ENCODE measurements at regions of chr4 and their contacts with region 1.

Region 1: DNA sequence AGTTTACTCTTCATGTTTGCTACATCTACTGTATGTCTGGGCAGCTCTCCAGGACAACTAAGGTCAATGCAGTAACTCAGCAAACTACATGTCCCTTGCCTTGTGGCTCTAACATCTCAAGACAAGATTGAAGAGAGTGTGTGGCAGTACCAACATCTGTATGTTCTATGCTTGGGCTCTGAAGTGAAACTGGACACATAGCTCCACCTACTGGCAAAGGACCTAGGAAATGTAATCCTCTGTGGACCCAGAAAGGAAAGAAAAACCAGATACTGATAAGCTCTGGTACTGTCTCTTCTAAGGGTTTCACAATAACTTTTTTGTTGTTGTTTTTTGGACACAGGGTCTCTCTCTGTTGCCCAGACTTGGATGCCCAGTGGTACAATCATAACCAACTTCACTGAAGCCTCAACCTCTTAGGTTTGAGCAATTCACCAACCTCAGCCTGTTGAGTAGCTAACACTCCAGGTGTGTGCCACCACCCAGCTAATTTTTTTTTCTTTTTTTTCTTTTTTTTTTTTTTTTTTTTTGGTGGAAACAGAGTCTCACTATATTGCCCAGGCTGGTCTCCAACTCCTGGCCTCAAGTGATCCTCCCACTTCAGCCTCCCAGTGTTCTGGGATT is 64.1 kb downstream of the QDPR start:
- DNase-seq: peak; percentile 43 to 62 (median 55)
- H3K4me3 ChIP-seq: no peak overlapping the region
- H3K4me3 Mint-ChIP-seq: no peak overlapping the region
- H3K27ac ChIP-seq: no peak overlapping the region
- H3K27ac Mint-ChIP-seq: no peak overlapping the region
- H3K4me1 ChIP-seq: no peaks in the 10 kb centered on the region
- H3K4me1 Mint-ChIP-seq: peaks cover 0 to 2% (median under 1%) of the 10 kb centered on the region in 4 donors
- H3K27me3 ChIP-seq: no peaks in the 10 kb centered on the region
- H3K27me3 Mint-ChIP-seq: peaks cover 0 to 2% of the 10 kb centered on the region in 2 donors

Region 2: GRCh38 chr4:16289897-16290554 is 1157.8 kb before region 1 on chr4:
- CTCF ChIA-PET with region 1: interaction called, 30 read pairs
- POLR2A ChIA-PET with region 1: no interaction called
- intact Hi-C with region 1: loop called (anchors 1 kb)
- DNase-seq: peak in 3 of 5 donors; percentile 16 to 26 (median 17)
- H3K4me3 ChIP-seq: no peak overlapping the region
- H3K4me3 Mint-ChIP-seq: peak overlapping the region in 2 of 8 donors; percentile 16 to 38
- H3K27ac ChIP-seq: no peak overlapping the region
- H3K27ac Mint-ChIP-seq: no peak overlapping the region
- H3K4me1 ChIP-seq: no peaks in the 10 kb centered on the region
- H3K4me1 Mint-ChIP-seq: peaks cover 0 to 4% (median 2%) of the 10 kb centered on the region in 4 donors
- H3K27me3 ChIP-seq: no peaks in the 10 kb centered on the region
- H3K27me3 Mint-ChIP-seq: peaks cover 3 to 6% of the 10 kb centered on the region in 2 donors

Region 3: GRCh38 chr4:16916719-16917337 is 531.0 kb before region 1 on chr4:
- CTCF ChIA-PET with region 1: interaction called, 20 read pairs
- POLR2A ChIA-PET with region 1: no interaction called
- intact Hi-C with region 1: loop called (anchors 1 kb)
- DNase-seq: peak; percentile 36 to 61 (median 58)
- H3K4me3 ChIP-seq: no peak overlapping the region
- H3K4me3 Mint-ChIP-seq: no peak overlapping the region
- H3K27ac ChIP-seq: no peak overlapping the region
- H3K27ac Mint-ChIP-seq: no peak overlapping the region
- H3K4me1 ChIP-seq: no peaks in the 10 kb centered on the region
- H3K4me1 Mint-ChIP-seq: peaks cover 0 to 3% (median 0%) of the 10 kb centered on the region in 4 donors
- H3K27me3 ChIP-seq: no peaks in the 10 kb centered on the region
- H3K27me3 Mint-ChIP-seq: no peaks in the 10 kb centered on the region

Region 4: DNA sequence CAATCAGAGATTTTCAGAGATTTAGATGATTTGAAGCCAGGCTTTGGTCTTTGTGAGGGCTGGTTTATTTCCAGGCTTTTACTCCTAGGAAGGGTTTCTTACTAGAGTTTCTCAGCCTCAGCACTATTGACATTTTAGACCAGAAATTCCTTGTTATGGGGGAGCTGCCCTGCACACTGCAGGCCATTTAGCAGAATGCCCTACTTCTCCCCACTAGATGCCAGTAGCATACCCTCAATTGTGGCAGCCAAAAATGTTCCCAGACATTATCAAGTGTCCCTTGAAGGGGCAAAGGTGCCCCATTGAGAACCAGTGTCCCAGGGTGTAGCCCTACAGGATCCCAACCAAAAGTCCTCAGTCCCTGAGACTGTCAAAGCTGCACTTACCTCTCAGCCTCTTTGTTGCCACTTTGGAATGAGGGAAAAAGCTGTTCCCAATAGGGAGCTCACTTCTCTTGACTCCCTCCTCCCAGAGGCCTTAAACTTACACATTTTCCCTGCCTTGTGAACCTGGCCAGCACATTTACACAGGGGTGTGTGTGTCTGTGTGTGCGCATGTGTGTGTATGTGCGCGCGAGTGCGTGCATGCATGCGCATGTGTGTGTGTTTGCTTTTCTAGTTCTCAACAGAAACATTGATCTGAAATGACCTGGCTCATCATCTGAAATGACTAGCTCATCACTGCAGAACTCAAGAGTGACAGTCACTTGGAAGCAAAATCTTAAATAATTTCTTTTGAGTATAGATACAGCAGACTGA is 167.3 kb before region 1 on chr4:
- CTCF ChIA-PET with region 1: interaction called, 15 read pairs
- POLR2A ChIA-PET with region 1: no interaction called
- intact Hi-C with region 1: loop called (anchors 1 kb)
- DNase-seq: no peak
- H3K4me3 ChIP-seq: no peak overlapping the region
- H3K4me3 Mint-ChIP-seq: no peak overlapping the region
- H3K27ac ChIP-seq: no peak overlapping the region
- H3K27ac Mint-ChIP-seq: no peak overlapping the region
- H3K4me1 ChIP-seq: no peaks in the 10 kb centered on the region
- H3K4me1 Mint-ChIP-seq: no peaks in the 10 kb centered on the region
- H3K27me3 ChIP-seq: no peaks in the 10 kb centered on the region
- H3K27me3 Mint-ChIP-seq: peaks cover 0 to 2% of the 10 kb centered on the region in 2 donors

Region 5: DNA sequence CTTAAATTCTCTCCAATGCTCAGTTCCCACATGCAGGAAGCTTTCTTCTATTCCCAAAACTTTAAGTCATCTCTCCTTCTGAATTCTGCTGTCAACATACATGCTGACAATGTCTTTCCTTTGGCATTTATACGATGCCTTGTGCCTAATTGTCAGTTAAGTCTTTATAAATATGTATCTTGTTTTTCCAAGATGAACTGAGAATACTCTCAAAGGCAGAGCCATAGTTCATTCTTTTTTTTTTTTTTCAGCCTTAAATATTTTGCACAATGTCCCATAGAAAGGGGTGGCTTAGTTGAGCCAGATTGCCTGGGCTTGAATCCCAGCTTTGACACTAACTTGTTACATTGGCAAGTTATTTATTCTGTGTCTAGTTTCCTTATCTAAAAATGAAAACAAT is 146.5 kb before region 1 on chr4:
- CTCF ChIA-PET with region 1: no interaction called
- POLR2A ChIA-PET with region 1: no interaction called
- intact Hi-C with region 1: no loop called
- DNase-seq: no peak
- H3K4me3 ChIP-seq: no peak overlapping the region
- H3K4me3 Mint-ChIP-seq: no peak overlapping the region
- H3K27ac ChIP-seq: no peak overlapping the region
- H3K27ac Mint-ChIP-seq: no peak overlapping the region
- H3K4me1 ChIP-seq: no peaks in the 10 kb centered on the region
- H3K4me1 Mint-ChIP-seq: no peaks in the 10 kb centered on the region
- H3K27me3 ChIP-seq: no peaks in the 10 kb centered on the region
- H3K27me3 Mint-ChIP-seq: peaks cover 11 to 15% of the 10 kb centered on the region in 2 donors

Region 6: GRCh38 chr4:17347445-17347844 is 100.3 kb before region 1 on chr4:
- CTCF ChIA-PET with region 1: interaction called, 21 read pairs
- POLR2A ChIA-PET with region 1: interaction called, 3 read pairs
- intact Hi-C with region 1: loop called (anchors 1 kb)
- DNase-seq: peak in 4 of 5 donors; percentile 13 to 30 (median 24)
- H3K4me3 ChIP-seq: no peak overlapping the region
- H3K4me3 Mint-ChIP-seq: no peak overlapping the region
- H3K27ac ChIP-seq: no peak overlapping the region
- H3K27ac Mint-ChIP-seq: no peak overlapping the region
- H3K4me1 ChIP-seq: no peaks in the 10 kb centered on the region
- H3K4me1 Mint-ChIP-seq: no peaks in the 10 kb centered on the region
- H3K27me3 ChIP-seq: no peaks in the 10 kb centered on the region
- H3K27me3 Mint-ChIP-seq: no peaks in the 10 kb centered on the region

Region 7: GRCh38 chr4:17468371-17469221 is 20.8 kb after region 1 on chr4:
- CTCF ChIA-PET with region 1: interaction called, 15 read pairs
- POLR2A ChIA-PET with region 1: no interaction called
- intact Hi-C with region 1: no loop called
- DNase-seq: no peak
- H3K4me3 ChIP-seq: no peak overlapping the region
- H3K4me3 Mint-ChIP-seq: no peak overlapping the region
- H3K27ac ChIP-seq: no peak overlapping the region
- H3K27ac Mint-ChIP-seq: no peak overlapping the region
- H3K4me1 ChIP-seq: no peaks in the 10 kb centered on the region
- H3K4me1 Mint-ChIP-seq: peaks cover 0 to 4% (median 0%) of the 10 kb centered on the region in 4 donors
- H3K27me3 ChIP-seq: no peaks in the 10 kb centered on the region
- H3K27me3 Mint-ChIP-seq: no peaks in the 10 kb centered on the region

Region 8: DNA sequence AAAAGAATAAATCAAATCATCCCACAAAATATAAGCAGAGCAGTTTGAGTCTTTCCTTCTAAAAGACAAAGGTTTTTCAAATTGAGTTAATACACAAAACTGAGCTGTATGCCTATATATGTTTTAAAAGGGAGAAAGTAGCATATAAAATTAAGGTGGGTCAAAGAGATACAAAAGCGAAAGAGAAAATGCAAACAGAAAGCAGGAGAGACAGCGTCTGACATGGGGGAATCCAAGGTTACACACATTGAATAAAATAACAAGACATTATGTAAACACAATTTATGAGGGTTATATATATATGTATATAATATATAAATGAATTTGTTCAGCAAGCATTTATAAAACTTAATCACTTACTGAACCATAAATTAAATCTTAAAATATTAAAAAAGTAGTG is 849.9 kb after region 1 on chr4:
- CTCF ChIA-PET with region 1: no interaction called
- POLR2A ChIA-PET with region 1: no interaction called
- intact Hi-C with region 1: no loop called
- DNase-seq: no peak
- H3K4me3 ChIP-seq: no peak overlapping the region
- H3K4me3 Mint-ChIP-seq: no peak overlapping the region
- H3K27ac ChIP-seq: no peak overlapping the region
- H3K27ac Mint-ChIP-seq: no peak overlapping the region
- H3K4me1 ChIP-seq: no peaks in the 10 kb centered on the region
- H3K4me1 Mint-ChIP-seq: no peaks in the 10 kb centered on the region
- H3K27me3 ChIP-seq: no peaks in the 10 kb centered on the region
- H3K27me3 Mint-ChIP-seq: peaks cover 0 to 2% of the 10 kb centered on the region in 2 donors

Measured in CD4-positive, alpha-beta memory T cell (primary cell).